Activated CD4-positive, alpha-beta T cell treated with anti-CD3 and anti-CD28 coated beads for 36 hours (primary cell): ENCODE measurements at regions of chr3 and their contacts with region 1.

Region 1: DNA sequence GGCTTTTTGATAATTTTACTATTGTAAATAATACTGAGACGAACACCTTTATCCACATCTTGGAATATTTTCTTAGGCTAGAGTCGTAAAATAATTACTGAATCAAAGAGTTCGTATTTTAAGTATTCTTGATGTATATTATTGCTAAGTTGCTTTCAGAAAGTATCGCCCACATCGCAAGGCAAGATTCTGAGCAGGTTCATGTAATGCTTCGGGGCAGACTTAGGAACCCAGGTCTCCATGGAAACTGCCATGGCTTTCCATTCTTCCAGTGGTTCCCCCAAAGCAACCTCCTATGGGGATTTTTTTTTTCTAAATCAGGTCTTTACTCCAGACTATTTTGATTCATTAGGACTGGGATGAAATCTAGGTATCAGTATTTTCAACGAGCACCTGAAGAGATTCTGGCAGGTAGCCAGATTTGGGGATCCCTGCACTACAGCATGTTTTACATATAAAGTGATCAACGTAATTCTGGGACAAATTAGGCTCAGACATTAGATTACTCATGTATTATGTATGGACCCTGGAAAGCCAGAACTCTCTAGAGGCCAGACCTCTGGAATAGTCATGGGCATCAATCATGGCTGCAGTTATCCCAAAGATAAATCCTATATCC is 86.5 kb downstream of the B3GNT5 start:
- DNase-seq: no peak
- ATAC-seq: no peak
- H3K4me3 Mint-ChIP-seq: no peak overlapping the region
- H3K27ac Mint-ChIP-seq: no peak overlapping the region
- H3K4me1 Mint-ChIP-seq: peaks cover 6% of the 10 kb centered on the region
- H3K27me3 Mint-ChIP-seq: no peaks in the 10 kb centered on the region

Region 2: GRCh38 chr3:183357564-183358079 is 18.1 kb after region 1 on chr3:
- CTCF ChIA-PET with region 1: no interaction called
- POLR2A ChIA-PET with region 1: no interaction called
- intact Hi-C with region 1: loop called in 1 of 2 experiments (anchors 2 kb)
- DNase-seq: no peak
- ATAC-seq: no peak
- H3K4me3 Mint-ChIP-seq: no peak overlapping the region
- H3K27ac Mint-ChIP-seq: no peak overlapping the region
- H3K4me1 Mint-ChIP-seq: peaks cover 9% of the 10 kb centered on the region
- H3K27me3 Mint-ChIP-seq: no peaks in the 10 kb centered on the region

Region 3: GRCh38 chr3:183481582-183481981 is 142.0 kb after region 1 on chr3:
- CTCF ChIA-PET with region 1: no interaction called
- POLR2A ChIA-PET with region 1: no interaction called
- intact Hi-C with region 1: no loop called
- DNase-seq: peak; percentile 50
- ATAC-seq: peak; percentile 81
- H3K4me3 Mint-ChIP-seq: no peak overlapping the region
- H3K27ac Mint-ChIP-seq: peak overlapping the region; percentile 34
- H3K4me1 Mint-ChIP-seq: peaks cover 14% of the 10 kb centered on the region
- H3K27me3 Mint-ChIP-seq: no peaks in the 10 kb centered on the region

Region 4: DNA sequence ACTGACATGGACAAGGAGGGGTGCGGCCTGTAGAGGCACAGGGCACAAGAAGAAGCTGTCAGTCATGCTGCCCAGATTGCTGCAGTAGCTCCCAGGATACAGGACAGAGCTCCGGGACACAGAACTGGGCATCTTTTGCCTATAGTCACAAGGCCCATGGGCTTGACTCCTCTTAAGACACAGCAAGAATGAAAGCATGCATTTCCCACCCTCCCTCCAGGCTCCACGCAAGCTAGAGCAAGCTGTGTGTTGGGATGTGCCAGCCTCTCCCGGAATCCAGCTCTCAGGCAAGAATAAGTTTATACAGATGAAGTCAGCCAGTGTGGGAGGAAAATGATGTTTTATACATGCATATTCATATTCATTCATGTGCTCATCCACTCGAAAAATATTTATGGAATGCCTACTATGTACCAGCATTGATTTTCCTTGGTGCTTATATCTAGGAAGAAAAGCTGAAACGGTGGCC is 153.1 kb after region 1 on chr3:
- CTCF ChIA-PET with region 1: no interaction called
- POLR2A ChIA-PET with region 1: no interaction called
- intact Hi-C with region 1: no loop called
- DNase-seq: no peak
- ATAC-seq: no peak
- H3K4me3 Mint-ChIP-seq: no peak overlapping the region
- H3K27ac Mint-ChIP-seq: no peak overlapping the region
- H3K4me1 Mint-ChIP-seq: peaks cover 6% of the 10 kb centered on the region
- H3K27me3 Mint-ChIP-seq: no peaks in the 10 kb centered on the region